ENCODE measurements at regions of chr17 and their contacts with region 1.

Region 1: DNA sequence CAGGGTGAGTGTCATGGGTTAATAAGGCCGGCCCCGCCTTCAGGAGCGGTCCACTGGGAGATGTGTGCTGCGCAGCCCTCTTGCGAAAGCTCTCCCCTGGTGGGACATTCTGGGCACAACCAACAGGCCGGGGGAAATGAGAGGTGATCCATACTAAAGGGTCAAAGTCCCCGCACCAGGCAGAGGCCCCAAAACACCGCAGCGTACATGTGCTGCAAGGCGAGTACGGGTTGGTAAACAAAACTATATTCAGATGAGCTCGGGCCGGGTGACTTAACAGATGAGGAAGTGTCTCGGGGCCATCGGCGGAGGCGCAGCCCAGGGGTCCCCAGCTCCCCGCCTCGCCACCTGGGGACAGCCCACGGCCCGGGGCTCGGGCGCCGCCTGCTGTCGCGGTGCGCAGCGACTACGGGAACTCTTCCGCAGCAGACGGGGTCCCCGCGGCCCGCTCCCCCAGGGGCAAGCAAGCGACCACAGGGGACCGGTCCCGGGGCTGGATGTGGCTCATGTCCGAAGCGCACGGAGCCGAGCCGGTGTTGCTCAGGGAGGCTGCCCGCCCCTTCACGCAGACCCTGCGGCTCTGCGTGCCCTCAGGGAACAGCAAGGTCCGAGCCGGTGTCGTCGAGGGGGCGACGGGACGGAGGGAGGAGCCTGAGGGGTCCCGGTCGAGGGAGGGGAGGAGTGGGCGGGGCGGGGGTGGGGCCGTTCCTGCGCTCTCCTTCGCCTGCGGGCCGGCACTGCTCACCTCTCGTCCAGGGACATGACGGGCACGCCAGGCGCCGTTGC is at the start of gene RAB37:
- DNase-seq: peak; percentile 73 to 83 (median 76)
- H3K4me3 ChIP-seq: peak within 1 kb of the TSS; percentile 46 to 89 (median 55)
- H3K4me3 Mint-ChIP-seq: peak within 1 kb of the TSS; percentile 86 to 93
- H3K27ac ChIP-seq: peak within 1 kb of the TSS; percentile 41 to 75
- H3K27ac Mint-ChIP-seq: peak within 1 kb of the TSS; percentile 84 to 94 (median 91)
- H3K4me1 ChIP-seq: peaks cover 55 to 73% of the 10 kb centered on the region in 2 donors
- H3K4me1 Mint-ChIP-seq: peaks cover 62% of the 10 kb centered on the region
- H3K27me3 ChIP-seq: no peaks in the 10 kb centered on the region
- H3K27me3 Mint-ChIP-seq: peaks cover 0 to 6% (median 0%) of the 10 kb centered on the region in 3 donors
- CTCF ChIP-seq: peak; percentile 67
- polyA plus RNA-seq, gene RAB37: 26.8 to 40.9 (median 33.1) TPM

Region 2: GRCh38 chr17:74566132-74566753 is 170.5 kb before region 1 on chr17:
- intact Hi-C with region 1: loop called in 1 of 2 experiments (anchors 10 kb)
- DNase-seq: peak in 2 of 3 donors; percentile 58 to 59
- H3K4me3 ChIP-seq: peak overlapping the region in 2 of 3 experiments; percentile 37 to 79
- H3K4me3 Mint-ChIP-seq: peak overlapping the region; percentile 73 to 91
- H3K27ac ChIP-seq: peak overlapping the region; percentile 26 to 82
- H3K27ac Mint-ChIP-seq: peak overlapping the region; percentile 14 to 95 (median 86)
- H3K4me1 ChIP-seq: peaks cover 75 to 87% of the 10 kb centered on the region in 2 donors
- H3K4me1 Mint-ChIP-seq: peaks cover 64% of the 10 kb centered on the region
- H3K27me3 ChIP-seq: no peaks in the 10 kb centered on the region
- H3K27me3 Mint-ChIP-seq: peaks cover 3 to 9% (median 4%) of the 10 kb centered on the region in 3 donors
- CTCF ChIP-seq: peak; percentile 82

Region 3: DNA sequence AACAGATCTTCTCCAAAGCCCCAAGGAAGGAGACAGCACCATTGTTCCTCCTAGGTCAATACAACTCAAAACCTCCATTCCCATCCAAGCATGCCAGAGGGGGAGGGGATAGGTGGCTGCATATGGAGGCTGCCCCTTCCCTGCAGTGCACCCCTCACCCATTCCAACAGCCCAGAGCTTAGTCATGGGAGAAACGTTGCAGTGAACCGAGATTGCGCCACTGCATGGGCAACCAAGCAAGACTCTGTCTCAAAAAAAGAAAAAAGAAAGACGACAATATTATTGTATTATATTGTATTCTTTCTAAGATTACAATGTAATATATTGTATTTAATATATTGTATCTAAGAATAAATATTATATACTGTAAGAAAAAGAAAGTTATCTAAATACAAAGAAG is 76.8 kb before region 1 on chr17:
- intact Hi-C with region 1: loop called (anchors 1 kb)
- DNase-seq: peak in 1 of 3 donors; percentile 43
- H3K4me3 ChIP-seq: no peak overlapping the region
- H3K4me3 Mint-ChIP-seq: no peak overlapping the region
- H3K27ac ChIP-seq: no peak overlapping the region
- H3K27ac Mint-ChIP-seq: no peak overlapping the region
- H3K4me1 ChIP-seq: peaks cover 15 to 17% of the 10 kb centered on the region in 2 donors
- H3K4me1 Mint-ChIP-seq: peaks cover 19% of the 10 kb centered on the region
- H3K27me3 ChIP-seq: no peaks in the 10 kb centered on the region
- H3K27me3 Mint-ChIP-seq: peaks cover 0 to 2% (median 2%) of the 10 kb centered on the region in 3 donors
- CTCF ChIP-seq: no peak

Region 4: DNA sequence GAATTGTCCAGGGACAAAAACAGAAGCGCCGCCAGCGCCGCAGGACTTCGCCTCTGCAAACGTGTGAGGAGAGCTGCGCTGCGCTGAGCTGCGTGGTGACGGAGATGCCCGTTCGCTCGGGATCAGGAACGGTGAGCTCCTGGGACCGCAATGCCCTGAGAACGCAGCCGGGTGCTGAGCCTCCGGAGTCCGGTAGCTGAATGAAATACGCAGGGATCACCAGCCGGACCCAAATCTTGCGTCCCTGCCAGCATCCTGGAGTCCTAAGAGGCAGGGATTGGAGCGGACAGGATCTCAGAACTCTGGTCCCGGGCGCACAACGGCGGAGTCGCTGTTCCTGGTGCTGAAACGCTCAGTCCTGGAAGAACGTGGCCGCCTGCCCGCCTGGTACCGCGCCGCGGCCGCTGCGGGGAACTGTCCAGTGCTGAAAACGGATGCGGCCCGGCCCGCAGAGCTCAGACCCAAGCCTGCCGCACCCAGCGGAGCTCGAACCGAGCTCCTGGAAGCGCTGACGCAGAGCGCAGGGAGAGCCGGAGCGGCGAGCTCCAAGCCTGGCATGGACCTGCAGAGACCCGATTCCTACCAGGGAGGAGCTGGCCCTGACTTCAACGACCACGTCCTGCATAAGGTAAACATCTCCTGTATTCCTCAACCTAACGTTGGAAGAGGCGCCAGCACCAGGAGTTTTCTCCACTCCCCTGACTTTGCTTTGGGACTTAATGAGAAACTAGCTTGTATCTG is 65.5 kb before region 1 on chr17:
- intact Hi-C with region 1: loop called in 1 of 2 experiments (anchors 5 kb)
- DNase-seq: peak; percentile 77 to 81 (median 77)
- H3K4me3 ChIP-seq: no peak overlapping the region
- H3K4me3 Mint-ChIP-seq: peak overlapping the region in 1 of 2 donors; percentile 74
- H3K27ac ChIP-seq: no peak overlapping the region
- H3K27ac Mint-ChIP-seq: peak overlapping the region in 1 of 7 donors; percentile 19
- H3K4me1 ChIP-seq: peaks cover 0 to 2% of the 10 kb centered on the region in 2 donors
- H3K4me1 Mint-ChIP-seq: peaks cover 3% of the 10 kb centered on the region
- H3K27me3 ChIP-seq: peaks cover 34 to 50% of the 10 kb centered on the region in 2 donors
- H3K27me3 Mint-ChIP-seq: peaks cover 48 to 60% (median 49%) of the 10 kb centered on the region in 3 donors
- CTCF ChIP-seq: no peak

Region 5: DNA sequence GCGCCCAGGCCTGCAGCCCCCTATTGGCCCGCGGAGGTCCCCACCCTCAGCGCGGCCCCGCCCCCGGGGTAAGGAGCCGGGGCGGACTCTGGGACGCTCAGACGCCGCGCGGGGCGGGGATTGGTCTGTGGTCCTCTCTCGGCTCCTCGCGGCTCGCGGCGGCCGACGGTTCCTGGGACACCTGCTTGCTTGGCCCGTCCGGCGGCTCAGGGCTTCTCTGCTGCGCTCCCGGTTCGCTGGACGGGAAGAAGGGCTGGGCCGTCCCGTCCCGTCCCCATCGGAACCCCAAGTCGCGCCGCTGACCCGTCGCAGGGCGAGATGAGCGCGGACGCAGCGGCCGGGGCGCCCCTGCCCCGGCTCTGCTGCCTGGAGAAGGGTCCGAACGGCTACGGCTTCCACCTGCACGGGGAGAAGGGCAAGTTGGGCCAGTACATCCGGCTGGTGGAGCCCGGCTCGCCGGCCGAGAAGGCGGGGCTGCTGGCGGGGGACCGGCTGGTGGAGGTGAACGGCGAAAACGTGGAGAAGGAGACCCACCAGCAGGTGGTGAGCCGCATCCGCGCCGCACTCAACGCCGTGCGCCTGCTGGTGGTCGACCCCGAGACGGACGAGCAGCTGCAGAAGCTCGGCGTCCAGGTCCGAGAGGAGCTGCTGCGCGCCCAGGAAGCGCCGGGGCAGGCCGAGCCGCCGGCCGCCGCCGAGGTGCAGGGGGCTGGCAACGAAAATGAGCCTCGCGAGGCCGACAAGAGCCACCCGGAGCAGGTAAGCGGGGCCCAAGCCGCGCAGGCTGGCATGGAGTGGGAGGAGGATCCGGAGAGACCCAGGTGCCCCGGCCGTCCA is 12.0 kb after region 1 on chr17 and contains the start of gene NHERF1:
- intact Hi-C with region 1: loop called in 1 of 2 experiments (anchors 2 kb)
- DNase-seq: peak; percentile 89 to 91 (median 90)
- H3K4me3 ChIP-seq: peak within 1 kb of the TSS; percentile 91 to 98 (median 97)
- H3K4me3 Mint-ChIP-seq: peak within 1 kb of the TSS; percentile 99 to 100
- H3K27ac ChIP-seq: peak within 1 kb of the TSS; percentile 18 to 87
- H3K27ac Mint-ChIP-seq: peak within 1 kb of the TSS; percentile 80 to 94 (median 86)
- H3K4me1 ChIP-seq: peaks cover 70 to 86% of the 10 kb centered on the region in 2 donors
- H3K4me1 Mint-ChIP-seq: peaks cover 73% of the 10 kb centered on the region
- H3K27me3 ChIP-seq: no peaks in the 10 kb centered on the region
- H3K27me3 Mint-ChIP-seq: no peaks in the 10 kb centered on the region
- CTCF ChIP-seq: no peak
- polyA plus RNA-seq, gene NHERF1: 79.5 to 149 (median 131) TPM

Region 6: GRCh38 chr17:75034236-75034908 is 297.7 kb after region 1 on chr17:
- intact Hi-C with region 1: no loop called
- DNase-seq: peak; percentile 65 to 72 (median 66)
- H3K4me3 ChIP-seq: peak overlapping the region; percentile 45 to 82 (median 52)
- H3K4me3 Mint-ChIP-seq: peak overlapping the region; percentile 94 to 95
- H3K27ac ChIP-seq: no peak overlapping the region
- H3K27ac Mint-ChIP-seq: peak overlapping the region; percentile 42 to 82 (median 68)
- H3K4me1 ChIP-seq: peaks cover 42 to 55% of the 10 kb centered on the region in 2 donors
- H3K4me1 Mint-ChIP-seq: peaks cover 50% of the 10 kb centered on the region
- H3K27me3 ChIP-seq: peaks cover 5 to 22% of the 10 kb centered on the region in 2 donors
- H3K27me3 Mint-ChIP-seq: peaks cover 30 to 41% (median 36%) of the 10 kb centered on the region in 3 donors
- CTCF ChIP-seq: no peak